Activated B cell treated with CpG ODN at 0.5 μM for 24 hours (primary cell): ENCODE measurements at regions of chr6 and their contacts with region 1.

Region 1: DNA sequence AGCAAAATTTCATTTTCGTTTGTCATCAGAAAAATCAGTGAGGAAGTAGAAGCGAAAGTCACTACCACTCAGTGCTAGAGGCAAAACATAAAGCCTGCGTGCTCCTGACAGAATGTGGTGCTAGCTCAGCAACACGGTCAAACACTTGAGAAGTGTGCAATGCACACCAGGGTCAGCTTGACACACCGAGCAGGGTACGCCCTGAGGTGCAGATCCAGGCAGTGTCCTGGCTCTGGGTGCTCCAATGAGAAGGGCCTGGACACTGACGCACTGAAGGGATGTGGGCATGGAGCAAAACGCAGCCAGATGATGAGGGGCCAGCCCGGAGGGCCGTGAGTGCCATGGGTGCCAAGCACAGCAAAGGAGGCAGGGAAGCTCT is 5.9 kb downstream of the RNASET2 start:
- DNase-seq: peak; percentile 26
- ATAC-seq: peak; percentile 26
- H3K4me3 Mint-ChIP-seq: peak overlapping the region; percentile 84
- H3K27ac Mint-ChIP-seq: peak overlapping the region; percentile 95
- H3K4me1 Mint-ChIP-seq: peaks cover 71% of the 10 kb centered on the region
- H3K27me3 Mint-ChIP-seq: no peaks in the 10 kb centered on the region
- CTCF ChIP-seq: no peak

Region 2: DNA sequence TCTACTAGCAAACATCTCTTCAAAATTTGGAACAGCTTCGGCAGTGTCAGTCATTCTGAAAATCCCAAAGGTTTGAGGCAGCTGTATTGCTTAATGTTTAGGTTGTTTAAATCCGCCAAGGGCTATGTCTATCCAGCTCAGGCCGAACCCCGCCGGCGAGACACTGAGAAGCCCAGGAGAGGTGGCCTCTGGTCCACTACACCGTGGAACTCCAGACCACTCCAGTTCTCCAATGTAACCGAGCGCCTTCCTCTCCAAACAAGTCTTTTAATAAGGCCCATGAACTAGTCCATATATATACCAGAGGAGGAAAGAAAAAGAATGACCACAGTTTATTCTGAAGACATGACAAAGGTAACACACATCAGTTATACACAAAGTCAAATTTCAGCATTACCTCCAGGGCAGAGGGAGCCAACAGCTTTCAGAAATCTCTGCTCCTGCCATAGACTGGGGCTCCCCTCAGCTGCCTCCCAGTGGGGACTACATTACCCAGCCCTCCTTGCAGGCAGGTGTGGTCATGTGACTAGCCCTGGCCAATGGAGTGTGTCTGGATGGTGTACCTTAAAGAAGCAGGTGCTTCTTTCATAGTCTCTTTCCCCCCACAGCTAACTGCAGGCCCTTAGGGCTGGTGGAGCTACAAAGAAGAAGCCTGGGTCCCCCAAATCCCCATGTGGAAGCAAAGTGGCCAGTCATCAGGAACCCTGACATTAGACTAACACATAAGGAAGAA is 363.8 kb before region 1 on chr6 and contains the start of gene RAMACL:
- CTCF ChIA-PET with region 1: interaction called, 4 read pairs
- POLR2A ChIA-PET with region 1: no interaction called
- intact Hi-C with region 1: loop called (anchors 2 kb)
- DNase-seq: no peak
- ATAC-seq: peak; percentile 60
- H3K4me3 Mint-ChIP-seq: no peak within 1 kb of the TSS
- H3K27ac Mint-ChIP-seq: peak within 1 kb of the TSS; percentile 71
- H3K4me1 Mint-ChIP-seq: peaks cover 42% of the 10 kb centered on the region
- H3K27me3 Mint-ChIP-seq: no peaks in the 10 kb centered on the region
- CTCF ChIP-seq: no peak
- total RNA-seq, gene RAMACL: 1.8 and 2.3 TPM in 2 replicates

Region 3: GRCh38 chr6:166786704-166787293 is 163.6 kb before region 1 on chr6:
- CTCF ChIA-PET with region 1: interaction called, 5 read pairs
- POLR2A ChIA-PET with region 1: no interaction called
- intact Hi-C with region 1: loop called (anchors 1 kb)
- DNase-seq: no peak
- ATAC-seq: peak; percentile 74
- H3K4me3 Mint-ChIP-seq: no peak overlapping the region
- H3K27ac Mint-ChIP-seq: no peak overlapping the region
- H3K4me1 Mint-ChIP-seq: no peaks in the 10 kb centered on the region
- H3K27me3 Mint-ChIP-seq: no peaks in the 10 kb centered on the region
- CTCF ChIP-seq: no peak

Region 4: DNA sequence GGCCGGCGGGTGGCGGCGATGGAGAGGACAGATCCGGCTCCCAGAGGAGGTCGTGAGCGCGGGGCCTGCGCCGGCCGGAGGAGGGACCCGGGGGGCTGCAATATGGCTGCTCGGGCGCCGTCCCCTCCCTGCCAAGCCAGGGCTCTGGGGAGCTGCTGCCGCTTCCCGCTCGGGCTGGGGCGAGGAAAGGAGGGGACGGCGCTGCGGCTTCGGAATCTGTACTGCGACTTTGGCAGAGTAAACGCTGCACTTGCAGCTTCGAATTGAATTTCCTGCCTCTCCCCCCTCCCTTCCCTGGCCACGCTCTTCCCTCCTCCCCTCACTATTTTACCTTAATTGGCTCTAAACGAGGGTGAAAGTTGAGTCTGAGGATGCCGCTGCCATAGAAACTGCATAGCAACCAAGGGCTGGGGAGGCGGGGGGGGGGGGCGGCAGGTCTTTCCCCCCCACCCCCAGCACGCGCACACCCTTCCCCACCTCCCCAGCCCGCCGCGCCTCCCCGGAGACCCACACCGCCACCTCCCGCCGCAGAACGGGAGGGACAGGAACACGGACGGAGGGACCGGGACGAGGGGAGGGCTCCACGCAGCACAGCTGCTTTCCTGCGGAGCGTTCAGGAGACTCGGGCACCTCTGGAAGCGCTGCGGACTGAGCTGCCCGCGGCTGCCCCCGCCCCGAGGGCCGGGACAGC is 88.0 kb before region 1 on chr6:
- CTCF ChIA-PET with region 1: no interaction called
- POLR2A ChIA-PET with region 1: interaction called, 6 read pairs
- intact Hi-C with region 1: loop called (anchors 2 kb)
- DNase-seq: peak; percentile 28
- ATAC-seq: peak; percentile 74
- H3K4me3 Mint-ChIP-seq: peak overlapping the region; percentile 82
- H3K27ac Mint-ChIP-seq: no peak overlapping the region
- H3K4me1 Mint-ChIP-seq: peaks cover 6% of the 10 kb centered on the region
- H3K27me3 Mint-ChIP-seq: peaks cover 13% of the 10 kb centered on the region
- CTCF ChIP-seq: no peak

Region 5: GRCh38 chr6:166989427-166990032 is 39.1 kb after region 1 on chr6:
- CTCF ChIA-PET with region 1: interaction called, 48 read pairs
- POLR2A ChIA-PET with region 1: interaction called, 24 read pairs
- intact Hi-C with region 1: loop called (anchors 1 kb)
- DNase-seq: peak; percentile 22
- ATAC-seq: peak; percentile 99
- H3K4me3 Mint-ChIP-seq: no peak overlapping the region
- H3K27ac Mint-ChIP-seq: no peak overlapping the region
- H3K4me1 Mint-ChIP-seq: peaks cover 11% of the 10 kb centered on the region
- H3K27me3 Mint-ChIP-seq: no peaks in the 10 kb centered on the region
- CTCF ChIP-seq: peak; percentile 40

Region 6: GRCh38 chr6:167113935-167114910 is 163.8 kb after region 1 on chr6:
- CTCF ChIA-PET with region 1: no interaction called
- POLR2A ChIA-PET with region 1: interaction called, 23 read pairs
- intact Hi-C with region 1: loop called (anchors 1 kb)
- DNase-seq: peak; percentile 75
- ATAC-seq: peak; percentile 78
- H3K4me3 Mint-ChIP-seq: peak overlapping the region; percentile 84
- H3K27ac Mint-ChIP-seq: peak overlapping the region; percentile 94
- H3K4me1 Mint-ChIP-seq: peaks cover 96% of the 10 kb centered on the region
- H3K27me3 Mint-ChIP-seq: no peaks in the 10 kb centered on the region
- CTCF ChIP-seq: no peak